Sigmoid colon (tissue), 7 donors: ENCODE measurements at regions of chr14 and their contacts with region 1.

Region 1: DNA sequence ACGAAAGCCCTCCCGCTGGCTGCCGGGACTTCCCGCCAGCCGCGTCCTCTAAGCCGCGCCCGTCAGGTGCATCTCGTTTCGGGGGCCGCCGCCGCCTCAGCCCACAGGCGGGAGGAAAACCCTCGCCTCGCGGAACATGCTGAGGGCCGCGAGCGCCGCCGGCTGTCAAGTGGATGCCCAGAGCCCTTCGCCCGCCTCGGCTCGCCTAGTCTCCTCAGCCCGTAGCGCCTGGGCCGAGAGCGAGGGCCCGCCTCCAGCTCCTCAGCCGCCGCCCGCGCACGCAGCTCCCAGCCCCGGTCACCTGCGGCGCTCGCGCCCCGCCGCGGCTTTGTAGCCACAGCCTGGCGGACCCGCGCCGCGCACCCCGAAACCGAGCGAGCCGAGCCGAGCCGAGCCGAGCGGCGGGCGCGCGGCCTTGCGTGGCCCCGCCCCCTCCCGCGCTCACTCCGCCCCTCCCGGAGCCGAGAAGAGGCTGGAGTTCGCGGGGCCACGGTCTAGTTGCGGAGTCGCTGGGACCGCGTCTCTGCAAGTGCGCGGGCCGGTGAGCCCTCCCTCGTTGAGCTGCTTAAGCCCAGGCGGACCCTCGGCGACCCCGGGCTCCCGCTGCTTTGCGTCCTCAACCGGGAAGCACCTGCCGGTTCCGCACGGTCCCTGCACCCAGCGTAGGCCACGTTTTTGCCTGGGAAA is at the start of gene EML5:
- DNase-seq: peak; percentile 89
- H3K4me3 ChIP-seq: peak within 1 kb of the TSS; percentile 59 to 84 (median 72)
- H3K27ac ChIP-seq: peak within 1 kb of the TSS; percentile 86 to 88 (median 88)
- H3K4me1 ChIP-seq: peaks cover 0 to 23% (median 13%) of the 10 kb centered on the region in 4 donors
- H3K27me3 ChIP-seq: no peaks in the 10 kb centered on the region
- CTCF ChIP-seq: peak; percentile 51 to 64 (median 56)
- EP300 ChIP-seq: no peak
- POLR2A ChIP-seq: no peak
- total RNA-seq, gene EML5: 2.5 to 6.1 (median 4.1) TPM

Region 2: GRCh38 chr14:88667555-88668273 is 125.0 kb before region 1 on chr14:
- intact Hi-C with region 1: loop called (anchors 5 kb)
- DNase-seq: peak; percentile 69
- H3K4me3 ChIP-seq: no peak overlapping the region
- H3K27ac ChIP-seq: peak overlapping the region in 2 of 4 donors; percentile 13 to 16
- H3K4me1 ChIP-seq: peaks cover 0 to 6% (median 4%) of the 10 kb centered on the region in 4 donors
- H3K27me3 ChIP-seq: no peaks in the 10 kb centered on the region
- CTCF ChIP-seq: peak; percentile 26 to 79 (median 64)
- EP300 ChIP-seq: no peak
- POLR2A ChIP-seq: no peak

Region 3: DNA sequence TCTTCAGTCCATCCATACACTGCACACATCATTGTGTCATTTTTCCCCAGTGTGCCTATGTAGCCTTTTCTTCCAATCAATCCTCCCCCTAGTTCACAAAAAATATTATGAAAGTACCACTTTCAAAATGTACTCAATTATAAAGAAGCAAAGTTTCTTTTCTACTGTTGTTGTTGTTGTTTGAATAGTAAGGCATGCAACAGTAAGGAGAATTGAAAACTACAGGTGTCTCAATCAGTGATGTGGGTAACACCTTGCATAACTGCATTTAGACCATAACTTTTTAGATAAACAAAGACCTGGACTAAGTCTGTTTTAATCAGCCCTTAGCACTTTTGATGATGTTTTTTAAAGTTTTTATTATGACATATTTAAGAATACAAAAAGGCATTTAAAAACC is 104.3 kb before region 1 on chr14:
- intact Hi-C with region 1: no loop called
- DNase-seq: no peak
- H3K4me3 ChIP-seq: no peak overlapping the region
- H3K27ac ChIP-seq: no peak overlapping the region
- H3K4me1 ChIP-seq: no peaks in the 10 kb centered on the region
- H3K27me3 ChIP-seq: no peaks in the 10 kb centered on the region
- CTCF ChIP-seq: no peak
- EP300 ChIP-seq: no peak
- POLR2A ChIP-seq: no peak

Region 4: GRCh38 chr14:88824314-88825077 is 31.8 kb after region 1 on chr14 and contains the start of gene TTC8:
- intact Hi-C with region 1: loop called (anchors 2 kb)
- DNase-seq: peak; percentile 90
- H3K4me3 ChIP-seq: peak within 1 kb of the TSS; percentile 58 to 81 (median 64)
- H3K27ac ChIP-seq: peak within 1 kb of the TSS; percentile 83 to 91 (median 84)
- H3K4me1 ChIP-seq: peaks cover 0 to 24% (median 9%) of the 10 kb centered on the region in 4 donors
- H3K27me3 ChIP-seq: no peaks in the 10 kb centered on the region
- CTCF ChIP-seq: no peak
- EP300 ChIP-seq: no peak
- POLR2A ChIP-seq: peak; percentile 55 to 62
- total RNA-seq, gene TTC8: 17.3 to 35.5 (median 27.1) TPM